ENCODE measurements at regions of chr2 and their contacts with region 1.

Region 1: DNA sequence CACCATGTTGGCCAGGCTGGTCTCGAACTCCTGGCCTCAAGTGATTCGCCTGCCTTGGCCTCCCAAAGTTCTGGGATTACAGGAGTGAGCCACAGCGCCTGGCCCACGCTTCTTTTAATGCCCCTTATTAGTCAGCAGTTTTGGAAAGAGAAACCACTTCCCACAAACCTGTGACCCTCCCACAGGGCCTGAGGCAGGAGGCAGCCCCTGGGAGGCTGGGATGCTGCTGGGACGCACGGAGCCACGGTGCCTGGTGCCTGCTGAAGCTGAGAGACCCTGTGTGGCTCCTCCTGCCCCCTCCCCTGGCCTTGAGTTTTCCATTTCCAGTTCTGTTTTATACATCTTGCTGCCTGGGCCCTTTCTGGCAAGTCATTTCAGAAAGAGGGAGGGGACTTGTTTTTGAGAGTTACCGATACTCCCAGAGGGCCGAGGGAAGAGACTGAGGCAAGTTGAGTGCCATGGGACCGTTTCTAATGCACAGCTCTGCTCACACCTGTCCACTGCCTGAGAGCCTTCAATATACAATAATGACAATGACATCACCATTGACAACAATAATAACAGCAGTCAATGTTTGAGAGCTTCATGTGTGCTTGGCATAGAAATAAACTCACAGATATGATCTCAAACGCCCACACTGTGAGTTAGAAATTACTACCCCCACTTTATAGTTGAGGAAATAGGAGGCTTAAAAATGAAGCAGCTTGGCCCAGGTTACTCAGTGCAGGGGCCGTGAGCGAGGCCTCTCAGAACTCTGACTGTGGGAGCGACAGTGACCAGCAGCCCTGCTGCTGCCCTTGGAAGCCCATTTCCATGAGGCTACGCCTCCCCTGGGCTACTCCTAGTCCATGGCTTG is 78.1 kb upstream of the YWHAQ start:
- DNase-seq: peak; percentile 26
- H3K4me3 Mint-ChIP-seq: peak overlapping the region; percentile 17
- H3K27ac Mint-ChIP-seq: peak overlapping the region; percentile 98
- H3K4me1 Mint-ChIP-seq: peaks cover 57% of the 10 kb centered on the region
- H3K27me3 Mint-ChIP-seq: no peaks in the 10 kb centered on the region

Region 2: DNA sequence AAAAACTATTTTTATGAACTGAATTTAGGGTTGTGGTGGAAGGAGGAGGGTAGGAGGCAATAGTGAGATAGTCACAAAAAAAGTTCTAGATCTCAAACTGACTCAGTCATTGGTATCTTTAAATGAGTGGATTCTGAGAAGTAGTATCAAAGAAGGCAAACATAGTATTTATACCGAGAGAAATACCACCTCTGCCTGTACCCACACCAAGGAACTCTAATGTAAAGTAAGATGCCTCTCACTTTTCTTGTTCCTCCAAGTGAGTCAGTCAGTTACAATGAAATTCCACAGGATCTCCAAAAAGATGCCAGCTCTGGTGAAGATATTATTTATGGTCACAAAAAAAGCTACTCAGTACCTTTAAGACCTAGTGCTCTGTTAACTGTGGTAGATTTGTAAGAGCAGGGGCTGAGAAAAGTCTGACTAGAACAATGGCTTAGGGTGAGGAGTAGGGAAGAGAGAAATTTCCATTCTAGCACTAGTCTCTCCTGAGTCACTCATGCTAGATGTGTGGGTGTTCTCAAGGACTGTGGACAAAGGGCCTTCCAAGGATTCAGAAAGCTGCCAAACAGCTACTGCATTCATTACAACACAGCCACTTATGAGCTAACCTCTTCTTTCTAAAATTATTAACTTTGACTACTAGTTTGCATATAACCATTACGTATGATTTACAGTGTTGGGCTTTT is 114.4 kb before region 1 on chr2:
- intact Hi-C with region 1: loop called (anchors 1 kb)
- DNase-seq: no peak
- H3K4me3 Mint-ChIP-seq: peak overlapping the region; percentile 42
- H3K27ac Mint-ChIP-seq: peak overlapping the region; percentile 93
- H3K4me1 Mint-ChIP-seq: peaks cover 57% of the 10 kb centered on the region
- H3K27me3 Mint-ChIP-seq: no peaks in the 10 kb centered on the region

Region 3: GRCh38 chr2:9613291-9613690 is 95.6 kb before region 1 on chr2:
- intact Hi-C with region 1: loop called (anchors 1 kb)
- DNase-seq: no peak
- H3K4me3 Mint-ChIP-seq: no peak overlapping the region
- H3K27ac Mint-ChIP-seq: no peak overlapping the region
- H3K4me1 Mint-ChIP-seq: peaks cover 78% of the 10 kb centered on the region
- H3K27me3 Mint-ChIP-seq: no peaks in the 10 kb centered on the region

Region 4: GRCh38 chr2:9697909-9698308 is 11.0 kb before region 1 on chr2:
- intact Hi-C with region 1: loop called (anchors 1 kb)
- DNase-seq: no peak
- H3K4me3 Mint-ChIP-seq: no peak overlapping the region
- H3K27ac Mint-ChIP-seq: peak overlapping the region; percentile 33
- H3K4me1 Mint-ChIP-seq: peaks cover 36% of the 10 kb centered on the region
- H3K27me3 Mint-ChIP-seq: no peaks in the 10 kb centered on the region

Region 5: DNA sequence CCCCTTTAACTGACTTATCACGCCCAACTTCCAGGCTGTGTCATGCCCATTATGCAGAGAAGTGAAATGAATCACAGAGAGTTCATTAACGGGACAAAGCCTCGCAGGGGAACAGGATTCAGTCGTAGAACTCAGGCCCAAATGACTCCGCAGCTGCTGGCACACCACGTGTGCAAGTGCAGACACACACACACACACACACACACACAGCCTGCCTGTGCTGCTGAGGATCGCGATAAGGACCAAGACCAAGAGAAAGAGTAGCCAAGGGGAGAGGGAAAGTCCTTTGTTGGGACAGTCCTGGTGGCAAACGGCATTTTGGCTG is 44.3 kb after region 1 on chr2:
- intact Hi-C with region 1: loop called (anchors 1 kb)
- DNase-seq: peak; percentile 56
- H3K4me3 Mint-ChIP-seq: peak overlapping the region; percentile 77
- H3K27ac Mint-ChIP-seq: peak overlapping the region; percentile 92
- H3K4me1 Mint-ChIP-seq: peaks cover 53% of the 10 kb centered on the region
- H3K27me3 Mint-ChIP-seq: peaks cover 21% of the 10 kb centered on the region

Region 6: GRCh38 chr2:9782197-9782719 is 73.3 kb after region 1 on chr2:
- intact Hi-C with region 1: loop called (anchors 1 kb)
- DNase-seq: peak; percentile 82
- H3K4me3 Mint-ChIP-seq: peak overlapping the region; percentile 66
- H3K27ac Mint-ChIP-seq: peak overlapping the region; percentile 99
- H3K4me1 Mint-ChIP-seq: peaks cover 67% of the 10 kb centered on the region
- H3K27me3 Mint-ChIP-seq: no peaks in the 10 kb centered on the region

Measured in activated T-helper 2 cell treated with anti-CD3 and anti-CD28 coated beads, Interferon-gamma antibody, Interleukin-2, Interleukin-4, amounts not matched to agents 10 μg/mL and 5 μg/mL and 100 μg/mL, durations not matched to agents 14 hours and 24 hours and 36 hours (primary cell).